ENCODE measurements at regions of chr21 and their contacts with region 1.

Region 1: GRCh38 chr21:27700974-27701614 is 734.2 kb upstream of the ADAMTS5 start:
- DNase-seq: peak; percentile 88
- ATAC-seq: peak; percentile 96
- H3K4me3 ChIP-seq: no peak overlapping the region
- H3K27ac ChIP-seq: no peak overlapping the region
- H3K4me1 ChIP-seq: no peaks in the 10 kb centered on the region
- H3K27me3 ChIP-seq: no peaks in the 10 kb centered on the region
- CTCF ChIP-seq: peak; percentile 98
- POLR2A ChIP-seq: peak; percentile 53; the same call in 1 of the 2 replicates
- RAD21 ChIP-seq: peak; percentile 99

Region 2: DNA sequence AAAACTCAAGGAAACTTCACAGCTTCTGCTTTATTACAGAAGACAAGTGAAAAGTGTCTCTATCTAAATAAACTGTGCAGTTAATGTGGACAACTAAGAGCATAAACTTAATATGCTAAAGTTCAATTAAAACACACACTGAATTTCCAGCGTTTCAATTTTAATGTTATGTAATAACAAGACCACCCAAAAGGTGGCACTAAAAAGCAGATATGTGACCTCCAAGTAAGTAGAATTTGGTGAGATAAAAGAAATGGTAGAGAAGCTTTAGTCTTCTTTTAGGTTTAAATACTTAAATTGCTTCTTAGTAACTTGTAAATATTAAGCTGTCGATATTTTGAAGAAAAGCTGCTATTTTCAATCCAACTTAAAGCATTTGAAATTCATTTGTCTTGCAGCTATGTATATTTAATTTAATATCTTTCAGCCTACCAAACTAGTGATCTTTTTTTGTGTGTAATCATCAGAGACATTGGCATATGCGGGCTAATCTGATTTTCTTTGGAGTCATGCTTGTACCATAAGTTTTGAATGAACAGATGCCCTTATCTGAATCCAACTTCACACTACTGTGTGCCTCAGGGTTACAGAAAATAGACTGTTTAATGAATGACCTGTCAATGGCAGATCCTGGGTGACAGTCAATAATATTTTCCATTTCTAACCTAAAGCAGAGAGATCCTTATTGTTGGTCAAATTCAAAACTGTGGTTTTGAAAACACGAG is 819.4 kb before region 1 on chr21:
- CTCF ChIA-PET with region 1: no interaction called
- POLR2A ChIA-PET with region 1: no interaction called
- dilution Hi-C with region 1: no loop called
- in situ Hi-C with region 1: no loop called
- intact Hi-C with region 1: loop called (anchors 1 kb)
- DNase-seq: peak; percentile 39
- ATAC-seq: peak; percentile 53; the same call in 1 of the 2 replicates
- H3K4me3 ChIP-seq: no peak overlapping the region
- H3K27ac ChIP-seq: no peak overlapping the region
- H3K4me1 ChIP-seq: no peaks in the 10 kb centered on the region; the same call in 1 of the 2 replicates
- H3K27me3 ChIP-seq: no peaks in the 10 kb centered on the region
- CTCF ChIP-seq: peak; percentile 48
- POLR2A ChIP-seq: no peak
- RAD21 ChIP-seq: peak; percentile 66

Region 3: DNA sequence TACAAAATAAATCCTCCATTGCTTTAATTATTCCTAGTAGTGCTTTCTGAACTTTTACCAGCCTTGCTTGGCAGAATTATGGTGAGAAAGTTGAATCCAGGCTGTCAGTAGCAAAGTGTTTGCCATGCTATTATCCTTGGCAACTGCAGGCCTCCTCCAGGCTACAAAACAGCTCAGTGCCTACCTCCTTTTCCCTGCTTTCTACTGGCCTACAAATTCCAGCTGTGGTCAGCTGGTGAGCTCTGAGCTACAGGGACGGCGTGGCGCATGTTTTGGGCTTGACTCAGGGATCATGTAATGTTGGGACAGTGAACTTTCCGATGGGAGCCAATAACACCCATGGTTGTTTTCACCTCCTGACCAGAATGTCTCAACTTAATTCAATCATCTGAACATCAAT is 278.1 kb before region 1 on chr21:
- CTCF ChIA-PET with region 1: no interaction called
- POLR2A ChIA-PET with region 1: no interaction called
- dilution Hi-C with region 1: no loop called
- in situ Hi-C with region 1: no loop called
- intact Hi-C with region 1: loop called (anchors 2 kb)
- DNase-seq: peak; percentile 95
- ATAC-seq: peak; percentile 88
- H3K4me3 ChIP-seq: no peak overlapping the region
- H3K27ac ChIP-seq: peak overlapping the region; percentile 8; the same call in 1 of the 2 replicates
- H3K4me1 ChIP-seq: peaks cover 13% of the 10 kb centered on the region; the same call in 1 of the 2 replicates
- H3K27me3 ChIP-seq: no peaks in the 10 kb centered on the region
- CTCF ChIP-seq: no peak
- POLR2A ChIP-seq: no peak
- RAD21 ChIP-seq: no peak

Region 4: GRCh38 chr21:27505516-27505915 is 195.6 kb before region 1 on chr21:
- CTCF ChIA-PET with region 1: no interaction called
- POLR2A ChIA-PET with region 1: no interaction called
- dilution Hi-C with region 1: no loop called
- in situ Hi-C with region 1: no loop called
- intact Hi-C with region 1: loop called (anchors 5 kb)
- DNase-seq: peak; percentile 70
- ATAC-seq: peak; percentile 51
- H3K4me3 ChIP-seq: no peak overlapping the region
- H3K27ac ChIP-seq: no peak overlapping the region
- H3K4me1 ChIP-seq: no peaks in the 10 kb centered on the region; the same call in 1 of the 2 replicates
- H3K27me3 ChIP-seq: no peaks in the 10 kb centered on the region
- CTCF ChIP-seq: no peak
- POLR2A ChIP-seq: no peak
- RAD21 ChIP-seq: no peak

Region 5: GRCh38 chr21:27688773-27689172 is 12.3 kb before region 1 on chr21:
- CTCF ChIA-PET with region 1: no interaction called
- POLR2A ChIA-PET with region 1: no interaction called
- dilution Hi-C with region 1: no loop called
- in situ Hi-C with region 1: no loop called
- intact Hi-C with region 1: no loop called
- DNase-seq: no peak
- ATAC-seq: no peak
- H3K4me3 ChIP-seq: no peak overlapping the region
- H3K27ac ChIP-seq: no peak overlapping the region
- H3K4me1 ChIP-seq: peaks cover 5% of the 10 kb centered on the region; the same call in 1 of the 2 replicates
- H3K27me3 ChIP-seq: no peaks in the 10 kb centered on the region
- CTCF ChIP-seq: no peak
- POLR2A ChIP-seq: no peak
- RAD21 ChIP-seq: no peak

Region 6: DNA sequence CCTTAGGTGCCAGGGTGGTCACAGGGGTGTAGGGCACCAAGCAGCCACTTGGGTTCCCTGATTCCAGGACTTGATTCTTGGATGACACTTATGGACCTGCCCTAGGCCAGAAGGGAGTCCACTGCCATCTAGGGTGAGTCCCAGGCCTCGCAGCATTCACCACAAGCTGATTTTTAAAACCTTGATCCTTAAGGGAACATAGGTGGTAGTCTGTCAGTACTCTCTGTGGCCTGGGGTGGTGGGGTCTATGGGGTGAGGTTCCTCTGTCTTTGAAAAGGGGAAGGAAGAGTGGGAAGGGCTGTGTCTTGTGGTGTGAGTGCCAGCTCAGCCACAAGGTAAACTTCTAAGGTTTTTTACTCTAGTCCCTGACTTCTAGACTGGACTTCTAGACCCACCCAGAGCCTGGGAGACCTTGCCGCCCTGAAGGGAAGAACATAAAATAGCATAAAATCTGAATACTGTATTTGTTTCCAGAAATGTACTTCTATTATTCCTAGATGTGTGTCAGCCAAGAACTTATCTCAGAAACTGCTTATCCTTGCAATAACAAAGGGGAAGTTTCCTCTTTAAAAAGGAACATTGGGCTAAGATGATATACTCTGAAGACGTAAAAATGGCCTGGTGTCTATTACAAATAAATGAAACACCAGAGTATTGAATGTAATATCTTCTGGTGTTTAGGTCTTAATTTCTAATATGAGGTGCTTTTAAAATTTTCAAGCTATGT is 534.2 kb after region 1 on chr21:
- CTCF ChIA-PET with region 1: no interaction called
- POLR2A ChIA-PET with region 1: no interaction called
- dilution Hi-C with region 1: no loop called
- in situ Hi-C with region 1: no loop called
- intact Hi-C with region 1: no loop called
- DNase-seq: no peak
- ATAC-seq: 0 out of 2 replicates have a peak, but pooled peaks have one; percentile 19
- H3K4me3 ChIP-seq: no peak overlapping the region
- H3K27ac ChIP-seq: peak overlapping the region; percentile 4; the same call in 1 of the 2 replicates
- H3K4me1 ChIP-seq: peaks cover 9% of the 10 kb centered on the region
- H3K27me3 ChIP-seq: no peaks in the 10 kb centered on the region
- CTCF ChIP-seq: peak; percentile 36
- POLR2A ChIP-seq: no peak
- RAD21 ChIP-seq: peak; percentile 25; the same call in 1 of the 2 replicates

Region 7: GRCh38 chr21:28522014-28522799 is 821.1 kb after region 1 on chr21:
- CTCF ChIA-PET with region 1: no interaction called
- POLR2A ChIA-PET with region 1: no interaction called
- dilution Hi-C with region 1: no loop called
- in situ Hi-C with region 1: loop called (anchors 10 kb)
- intact Hi-C with region 1: loop called (anchors 10 kb)
- DNase-seq: peak; percentile 79
- ATAC-seq: peak; percentile 90
- H3K4me3 ChIP-seq: no peak overlapping the region
- H3K27ac ChIP-seq: peak overlapping the region; percentile 54; the same call in 1 of the 2 replicates
- H3K4me1 ChIP-seq: peaks cover 2% of the 10 kb centered on the region
- H3K27me3 ChIP-seq: no peaks in the 10 kb centered on the region
- CTCF ChIP-seq: peak; percentile 71
- POLR2A ChIP-seq: no peak
- RAD21 ChIP-seq: peak; percentile 82

Measured in IMR-90 (cell line).